Ovary (tissue), 10 donors: ENCODE measurements at regions of chr1 and their contacts with region 1.

Region 1: DNA sequence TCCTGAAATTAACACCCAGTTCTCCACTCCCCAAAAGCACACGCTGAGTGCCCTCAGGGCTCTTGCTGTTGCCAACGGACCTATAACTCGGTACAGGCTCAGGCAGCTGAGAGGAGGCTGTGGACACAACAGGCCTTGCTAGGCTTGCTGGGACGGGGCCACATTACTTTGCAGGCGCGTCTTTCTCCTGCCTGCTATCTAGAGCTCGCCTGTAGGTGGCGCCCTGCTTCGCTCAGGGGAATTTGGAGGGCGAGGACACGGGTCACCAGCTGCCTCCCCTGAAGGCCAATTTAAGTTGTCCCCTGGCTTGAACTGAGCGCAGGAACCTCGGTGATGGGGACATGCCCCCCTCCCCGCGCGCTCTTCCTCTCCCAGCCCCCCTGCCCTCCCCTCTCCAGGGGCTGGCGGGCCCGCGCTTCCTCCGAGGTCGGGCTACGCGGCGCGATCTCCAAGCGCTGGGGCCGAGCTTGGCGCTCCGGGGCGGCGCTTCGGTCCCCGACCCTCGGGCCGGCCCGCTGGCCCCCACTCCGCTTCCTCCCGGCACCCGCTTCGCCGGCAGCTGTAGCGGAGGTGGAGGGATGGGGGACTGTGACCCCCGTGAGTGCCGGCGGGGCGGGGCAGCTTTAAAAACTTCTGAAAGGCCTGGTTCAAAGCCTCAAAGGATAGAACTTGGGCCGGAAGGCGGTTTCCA is 32.4 kb upstream of the NFIA start:
- DNase-seq: peak; percentile 90 to 97 (median 96)
- H3K4me3 ChIP-seq: peak overlapping the region; percentile 75
- H3K27ac ChIP-seq: peak overlapping the region; percentile 78 to 94
- H3K4me1 ChIP-seq: peaks cover 7% of the 10 kb centered on the region
- H3K27me3 ChIP-seq: no peaks in the 10 kb centered on the region
- CTCF ChIP-seq: peak; percentile 93 to 98 (median 94)
- EP300 ChIP-seq: no peak
- POLR2A ChIP-seq: peak; percentile 63

Region 2: DNA sequence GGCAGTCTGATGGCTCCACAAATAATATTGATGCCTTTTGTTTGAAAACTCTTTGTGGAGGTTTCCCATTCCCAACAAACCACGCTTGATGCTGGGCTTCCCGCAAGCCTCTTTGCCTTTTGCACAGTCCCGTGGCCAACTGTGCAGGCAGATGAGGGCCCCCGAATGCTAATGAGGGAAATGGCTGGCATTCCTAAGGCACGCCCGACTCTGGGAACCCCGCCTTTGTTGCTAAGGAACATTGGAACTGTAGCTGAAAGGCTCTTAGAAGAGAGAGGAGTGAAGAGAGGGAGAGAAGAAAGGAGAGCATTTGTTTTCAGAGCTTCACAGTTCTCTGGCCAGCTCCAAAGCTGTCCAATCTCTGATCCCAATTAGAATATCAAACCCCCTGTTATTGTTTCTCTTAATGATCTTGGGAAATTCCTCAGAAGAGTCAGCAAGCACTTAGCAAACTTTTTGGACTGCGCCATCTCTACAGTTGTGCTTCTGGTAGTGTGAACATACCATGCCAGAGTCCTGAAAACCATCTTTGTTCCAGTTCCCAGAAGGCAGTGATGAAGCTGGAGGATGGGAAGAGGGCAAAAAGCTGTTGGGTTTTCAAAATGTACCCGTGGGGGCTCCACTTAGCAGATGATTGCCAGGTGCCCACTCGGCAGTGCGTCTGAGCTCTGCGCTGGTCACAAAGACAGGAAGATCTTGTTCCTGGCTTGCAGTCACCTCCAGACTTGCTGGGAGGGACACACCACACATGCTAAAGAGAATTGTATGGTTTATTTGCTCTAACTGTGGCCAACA is 1063.3 kb before region 1 on chr1:
- intact Hi-C with region 1: loop called in 1 of 4 experiments (anchors 10 kb)
- DNase-seq: no peak
- H3K4me3 ChIP-seq: no peak overlapping the region
- H3K27ac ChIP-seq: no peak overlapping the region
- H3K4me1 ChIP-seq: no peaks in the 10 kb centered on the region
- H3K27me3 ChIP-seq: no peaks in the 10 kb centered on the region
- CTCF ChIP-seq: no peak
- EP300 ChIP-seq: no peak
- POLR2A ChIP-seq: no peak

Region 3: GRCh38 chr1:60904089-60904851 is 145.7 kb before region 1 on chr1:
- intact Hi-C with region 1: no loop called
- DNase-seq: no peak
- H3K4me3 ChIP-seq: no peak overlapping the region
- H3K27ac ChIP-seq: no peak overlapping the region
- H3K4me1 ChIP-seq: peaks cover 3% of the 10 kb centered on the region
- H3K27me3 ChIP-seq: no peaks in the 10 kb centered on the region
- CTCF ChIP-seq: no peak
- EP300 ChIP-seq: no peak
- POLR2A ChIP-seq: no peak

Region 4: DNA sequence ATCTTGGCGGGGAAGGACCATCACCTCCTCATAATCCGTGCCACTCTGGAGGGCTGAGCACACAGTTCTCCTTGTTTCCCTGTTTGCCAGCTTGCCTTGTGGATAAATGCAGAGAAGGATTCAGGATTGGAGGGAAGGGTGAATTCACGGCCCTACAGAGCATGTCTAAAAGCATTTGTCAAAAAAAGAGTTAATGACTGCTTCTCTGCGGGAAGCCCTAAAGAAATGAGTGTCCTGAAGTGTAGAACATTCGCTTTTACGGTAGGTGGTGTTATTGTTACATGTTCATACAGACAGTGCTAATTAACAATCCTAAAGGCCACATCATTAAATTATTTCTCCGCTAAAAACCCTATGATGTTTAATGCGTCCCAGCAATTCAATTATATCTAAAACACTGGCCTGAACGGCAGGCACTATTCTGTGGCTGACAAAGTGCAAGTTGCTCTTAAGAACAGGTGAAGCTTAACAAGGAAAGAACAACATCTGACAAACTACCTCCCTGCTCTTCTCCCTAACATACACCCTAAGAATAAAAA is 80.0 kb before region 1 on chr1:
- intact Hi-C with region 1: loop called in 1 of 4 experiments (anchors 2 kb)
- DNase-seq: no peak
- H3K4me3 ChIP-seq: no peak overlapping the region
- H3K27ac ChIP-seq: no peak overlapping the region
- H3K4me1 ChIP-seq: peaks cover 2% of the 10 kb centered on the region
- H3K27me3 ChIP-seq: no peaks in the 10 kb centered on the region
- CTCF ChIP-seq: peak in 2 of 3 donors; percentile 68 to 84
- EP300 ChIP-seq: no peak
- POLR2A ChIP-seq: no peak

Region 5: GRCh38 chr1:61337981-61338848 is 288.2 kb after region 1 on chr1:
- intact Hi-C with region 1: loop called in 2 of 4 experiments (anchors 2 to 10 kb)
- DNase-seq: peak; percentile 49 to 60 (median 59)
- H3K4me3 ChIP-seq: no peak overlapping the region
- H3K27ac ChIP-seq: peak overlapping the region; percentile 21 to 60
- H3K4me1 ChIP-seq: peaks cover 11% of the 10 kb centered on the region
- H3K27me3 ChIP-seq: no peaks in the 10 kb centered on the region
- CTCF ChIP-seq: peak in 2 of 3 donors; percentile 21 to 57
- EP300 ChIP-seq: no peak
- POLR2A ChIP-seq: no peak

Region 6: GRCh38 chr1:61453111-61453961 is 403.3 kb after region 1 on chr1:
- intact Hi-C with region 1: loop called (anchors 2 to 10 kb)
- DNase-seq: peak; percentile 91 to 97 (median 92)
- H3K4me3 ChIP-seq: no peak overlapping the region
- H3K27ac ChIP-seq: peak overlapping the region; percentile 14 to 85
- H3K4me1 ChIP-seq: peaks cover 15% of the 10 kb centered on the region
- H3K27me3 ChIP-seq: no peaks in the 10 kb centered on the region
- CTCF ChIP-seq: peak; percentile 62 to 73 (median 67)
- EP300 ChIP-seq: no peak
- POLR2A ChIP-seq: no peak

Region 7: DNA sequence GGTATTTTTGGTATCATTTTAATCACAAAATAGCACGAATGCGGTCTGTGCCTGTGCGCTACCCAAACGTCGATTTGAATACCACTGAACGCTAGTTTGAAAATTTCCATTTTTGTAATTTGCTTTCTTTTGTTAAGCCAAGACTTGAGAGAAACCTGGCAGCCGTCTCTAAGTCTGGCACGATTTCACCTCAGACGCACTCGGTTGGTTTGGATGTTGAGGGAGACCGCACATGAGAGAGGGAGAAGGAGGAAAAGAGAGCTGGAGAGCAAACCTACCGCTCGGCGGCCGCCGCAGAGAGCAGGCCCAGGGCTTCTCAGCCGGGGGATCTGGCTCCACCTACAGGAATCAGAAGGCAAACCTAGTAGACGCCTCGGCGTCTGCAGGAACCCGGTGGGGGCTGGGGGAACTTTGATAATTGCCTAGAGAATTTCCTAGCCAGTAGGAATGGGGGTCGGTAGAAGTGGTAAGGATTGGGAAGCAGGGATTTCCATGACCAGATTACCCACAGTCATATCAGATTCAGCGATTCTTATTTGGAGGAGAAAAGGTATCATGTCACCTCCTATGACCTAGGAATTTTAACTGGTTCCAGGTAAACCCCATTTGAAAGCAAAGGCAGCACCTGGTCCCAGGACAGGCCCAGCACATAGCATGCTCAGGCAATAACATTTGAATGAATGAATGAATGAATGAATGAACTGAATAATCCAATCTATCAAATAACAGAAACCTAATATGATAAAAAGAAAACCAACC is 591.8 kb after region 1 on chr1:
- intact Hi-C with region 1: loop called in 3 of 4 experiments (anchors 5 to 10 kb)
- DNase-seq: peak; percentile 79 to 87 (median 81)
- H3K4me3 ChIP-seq: peak overlapping the region; percentile 21
- H3K27ac ChIP-seq: peak overlapping the region in 1 of 2 donors; percentile 64
- H3K4me1 ChIP-seq: peaks cover 18% of the 10 kb centered on the region
- H3K27me3 ChIP-seq: no peaks in the 10 kb centered on the region
- CTCF ChIP-seq: peak; percentile 46 to 71 (median 63)
- EP300 ChIP-seq: no peak
- POLR2A ChIP-seq: no peak

Region 8: GRCh38 chr1:61851849-61852669 is 802.1 kb after region 1 on chr1:
- intact Hi-C with region 1: loop called in 2 of 4 experiments (anchors 5 to 10 kb)
- DNase-seq: no peak
- H3K4me3 ChIP-seq: no peak overlapping the region
- H3K27ac ChIP-seq: no peak overlapping the region
- H3K4me1 ChIP-seq: no peaks in the 10 kb centered on the region
- H3K27me3 ChIP-seq: no peaks in the 10 kb centered on the region
- CTCF ChIP-seq: peak; percentile 49 to 66 (median 51)
- EP300 ChIP-seq: no peak
- POLR2A ChIP-seq: no peak